ENCODE measurements at regions of chr1 and their contacts with region 1.

Region 1: DNA sequence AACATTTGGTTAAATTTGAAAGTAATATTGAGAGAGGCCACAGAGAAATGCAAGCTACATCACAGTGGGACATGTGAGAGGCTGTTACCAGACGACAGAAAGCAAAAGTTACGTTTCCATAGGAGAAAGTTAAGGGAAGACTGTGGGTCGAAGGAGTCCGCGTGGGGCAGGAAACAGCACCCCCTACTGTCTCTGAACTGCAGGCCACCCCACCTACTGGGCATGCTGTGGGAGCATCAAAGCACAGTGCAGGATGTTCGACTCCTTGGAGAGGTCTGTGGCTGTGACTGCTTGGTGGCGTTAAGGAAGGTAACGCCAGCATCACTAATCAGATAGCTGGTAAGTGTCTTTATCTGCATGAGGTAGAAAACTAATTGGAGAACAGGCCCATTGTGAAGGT is 123.9 kb downstream of the PTBP2 start:
- DNase-seq: peak; percentile 62
- ATAC-seq: peak; percentile 64

Region 2: DNA sequence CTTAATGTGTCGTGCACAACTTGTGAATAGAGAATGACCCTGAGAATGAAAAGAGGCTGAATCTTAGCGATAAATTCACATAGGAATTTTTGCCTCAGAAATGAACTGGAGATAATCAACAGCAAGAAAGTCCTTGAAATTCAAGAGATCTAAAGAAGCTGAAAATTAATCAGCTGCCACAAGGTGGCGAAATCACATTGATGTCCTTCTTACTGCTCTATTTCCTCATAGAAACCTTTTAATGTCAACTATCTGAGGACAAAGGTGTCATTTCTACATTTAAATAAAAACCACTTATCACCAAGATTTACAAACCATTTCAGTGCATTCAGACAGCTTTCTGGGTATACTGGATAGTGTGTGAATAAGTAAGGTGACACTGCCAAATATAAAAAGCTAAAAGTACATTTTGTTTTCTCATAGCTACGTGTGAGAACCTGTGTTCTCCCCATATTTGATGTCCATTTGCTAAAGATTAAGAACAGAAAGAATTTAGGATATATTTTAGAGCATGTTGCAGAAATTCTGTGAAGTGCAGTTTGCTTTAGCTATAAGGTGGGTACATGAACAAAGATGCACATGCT is 609.2 kb before region 1 on chr1:
- intact Hi-C with region 1: loop called (anchors 5 kb)
- DNase-seq: no peak
- ATAC-seq: no peak

Region 3: GRCh38 chr1:97451046-97451826 is 605.8 kb after region 1 on chr1:
- intact Hi-C with region 1: no loop called
- DNase-seq: no peak
- ATAC-seq: no peak

Measured in Right ventricle myocardium inferior (tissue), 1 donor.